ENCODE measurements at regions of chr17 and their contacts with region 1.

Region 1: GRCh38 chr17:46995841-46996571 is 17.0 kb upstream of the RPRML start:
- DNase-seq: no peak
- H3K4me3 ChIP-seq: no peak overlapping the region
- H3K27ac ChIP-seq: no peak overlapping the region
- H3K4me1 ChIP-seq: peaks cover 0 to 3% (median 0%) of the 10 kb centered on the region in 4 donors
- H3K27me3 ChIP-seq: no peaks in the 10 kb centered on the region
- CTCF ChIP-seq: no peak
- EP300 ChIP-seq: no peak
- POLR2A ChIP-seq: no peak

Region 2: GRCh38 chr17:46940621-46941404 is 55.2 kb before region 1 on chr17:
- intact Hi-C with region 1: loop called (anchors 5 kb)
- DNase-seq: no peak
- H3K4me3 ChIP-seq: no peak overlapping the region
- H3K27ac ChIP-seq: no peak overlapping the region
- H3K4me1 ChIP-seq: peaks cover 19 to 34% (median 23%) of the 10 kb centered on the region in 4 donors
- H3K27me3 ChIP-seq: no peaks in the 10 kb centered on the region
- CTCF ChIP-seq: peak; percentile 67 to 81 (median 72)
- EP300 ChIP-seq: no peak
- POLR2A ChIP-seq: no peak

Region 3: DNA sequence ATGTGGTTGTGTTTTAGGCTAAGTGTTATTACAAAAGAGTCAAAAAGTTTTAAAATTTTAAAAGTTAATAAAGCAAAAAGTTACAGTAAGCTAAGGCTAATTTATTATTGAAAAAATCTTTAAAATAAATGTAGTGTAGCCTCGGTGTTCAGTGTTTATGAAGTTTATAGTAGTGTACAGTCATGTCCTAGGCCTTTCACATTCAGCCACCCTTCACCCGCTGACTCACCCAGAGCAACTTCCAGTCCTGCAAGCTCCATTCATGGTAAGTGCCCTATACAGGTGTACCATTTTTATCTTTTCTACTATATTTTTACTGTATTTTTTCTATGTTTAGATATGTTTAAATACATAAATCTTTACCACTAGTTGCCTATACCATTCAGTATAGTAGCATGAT is 81.6 kb after region 1 on chr17:
- intact Hi-C with region 1: no loop called
- DNase-seq: no peak
- H3K4me3 ChIP-seq: no peak overlapping the region
- H3K27ac ChIP-seq: no peak overlapping the region
- H3K4me1 ChIP-seq: no peaks in the 10 kb centered on the region
- H3K27me3 ChIP-seq: no peaks in the 10 kb centered on the region
- CTCF ChIP-seq: no peak
- EP300 ChIP-seq: no peak
- POLR2A ChIP-seq: no peak

Measured in esophagus muscularis mucosa (tissue), 4 donors.